PC-3 (cell line): ENCODE measurements at regions of chr1 and their contacts with region 1.

Region 1: DNA sequence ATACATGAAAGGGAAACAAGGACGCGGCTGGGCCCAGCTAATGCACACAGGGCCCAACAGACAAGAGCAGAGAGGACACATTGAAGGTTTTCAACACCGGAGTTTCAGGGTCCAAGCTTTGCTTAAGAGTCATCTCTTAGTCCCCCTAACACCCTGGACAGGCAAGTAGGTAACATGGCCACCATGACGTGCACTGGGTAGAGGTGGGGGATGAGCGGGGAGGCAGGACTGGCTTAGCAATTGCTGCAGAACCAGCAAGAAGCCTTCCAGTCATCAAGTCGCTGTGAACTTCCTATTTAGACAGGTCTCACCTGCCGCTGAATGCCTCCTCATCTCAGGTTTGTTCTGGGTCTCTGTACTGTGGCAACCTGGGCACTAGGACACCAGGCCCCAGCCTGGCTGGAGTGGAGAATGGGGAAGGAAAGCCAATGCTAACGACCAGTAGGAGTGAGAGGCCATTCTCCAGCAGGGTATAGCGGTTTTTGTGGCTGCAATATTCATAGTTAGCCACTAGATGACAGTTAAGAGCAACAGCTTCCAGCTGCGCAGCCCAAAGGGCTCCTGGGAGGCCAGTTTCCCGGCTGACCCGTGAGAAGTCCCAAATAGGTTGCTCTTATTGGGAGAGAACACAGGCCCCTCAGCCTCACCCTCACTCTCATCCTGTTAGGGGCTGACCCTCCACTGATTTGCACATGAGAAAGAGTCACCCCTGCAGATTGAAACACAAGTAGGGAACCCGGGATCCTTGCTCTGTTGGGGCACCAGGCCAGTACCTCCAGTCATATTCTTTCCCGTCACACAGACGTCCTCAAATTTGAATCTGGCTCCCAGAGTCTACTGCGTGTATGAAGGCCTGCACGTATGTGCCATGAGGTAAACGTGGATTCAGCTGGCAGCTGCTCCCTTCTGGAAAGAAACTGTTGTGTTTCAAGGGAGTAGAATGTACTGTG is 6.0 kb upstream of the PIGC start:
- DNase-seq: peak; percentile 97
- ATAC-seq: peak; percentile 48
- H3K4me3 ChIP-seq: peak overlapping the region; percentile 45
- H3K27ac ChIP-seq: peak overlapping the region; percentile 86
- H3K4me1 ChIP-seq: peaks cover 79% of the 10 kb centered on the region
- H3K27me3 ChIP-seq: no peaks in the 10 kb centered on the region
- CTCF ChIP-seq: peak; percentile 100

Region 2: GRCh38 chr1:172482044-172482443 is 32.2 kb after region 1 on chr1:
- CTCF ChIA-PET with region 1: interaction called, 5 read pairs
- POLR2A ChIA-PET with region 1: interaction called, 6 read pairs
- intact Hi-C with region 1: loop called (anchors 1 kb)
- DNase-seq: peak; percentile 50
- ATAC-seq: no peak
- H3K4me3 ChIP-seq: no peak overlapping the region
- H3K27ac ChIP-seq: no peak overlapping the region
- H3K4me1 ChIP-seq: peaks cover 46% of the 10 kb centered on the region
- H3K27me3 ChIP-seq: no peaks in the 10 kb centered on the region
- CTCF ChIP-seq: no peak

Region 3: DNA sequence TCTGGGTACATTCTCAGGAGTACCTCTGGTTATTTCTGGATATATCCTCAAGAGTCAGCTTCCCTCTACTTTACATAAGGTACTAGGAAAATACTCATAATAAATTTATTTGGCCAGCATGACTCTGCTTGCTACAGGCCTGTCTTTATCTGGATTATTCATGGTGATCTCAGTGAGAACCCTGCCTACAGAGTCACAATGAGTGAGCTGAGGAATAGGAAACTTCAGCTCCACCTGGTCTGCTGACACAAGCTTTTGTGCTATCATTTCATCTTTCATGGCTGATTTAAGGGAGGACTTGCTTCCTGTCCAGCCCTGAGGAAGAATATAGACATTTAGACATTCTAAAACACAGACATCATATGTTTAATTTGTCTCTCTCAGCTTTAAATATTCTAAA is 63.6 kb after region 1 on chr1:
- CTCF ChIA-PET with region 1: interaction called, 4 read pairs
- POLR2A ChIA-PET with region 1: interaction called, 3 read pairs
- intact Hi-C with region 1: loop called (anchors 1 kb)
- DNase-seq: peak; percentile 89
- ATAC-seq: peak; percentile 98
- H3K4me3 ChIP-seq: no peak overlapping the region
- H3K27ac ChIP-seq: peak overlapping the region; percentile 33
- H3K4me1 ChIP-seq: peaks cover 25% of the 10 kb centered on the region
- H3K27me3 ChIP-seq: no peaks in the 10 kb centered on the region
- CTCF ChIP-seq: no peak

Region 4: GRCh38 chr1:172609528-172609927 is 159.7 kb after region 1 on chr1:
- CTCF ChIA-PET with region 1: interaction called, 13 read pairs
- POLR2A ChIA-PET with region 1: no interaction called
- intact Hi-C with region 1: loop called (anchors 1 kb)
- DNase-seq: peak; percentile 88
- ATAC-seq: peak; percentile 93
- H3K4me3 ChIP-seq: no peak overlapping the region
- H3K27ac ChIP-seq: no peak overlapping the region
- H3K4me1 ChIP-seq: 0 out of 2 replicates have a peak, but pooled peaks cover 8% of the 10 kb centered on the region
- H3K27me3 ChIP-seq: no peaks in the 10 kb centered on the region
- CTCF ChIP-seq: peak; percentile 99

Region 5: DNA sequence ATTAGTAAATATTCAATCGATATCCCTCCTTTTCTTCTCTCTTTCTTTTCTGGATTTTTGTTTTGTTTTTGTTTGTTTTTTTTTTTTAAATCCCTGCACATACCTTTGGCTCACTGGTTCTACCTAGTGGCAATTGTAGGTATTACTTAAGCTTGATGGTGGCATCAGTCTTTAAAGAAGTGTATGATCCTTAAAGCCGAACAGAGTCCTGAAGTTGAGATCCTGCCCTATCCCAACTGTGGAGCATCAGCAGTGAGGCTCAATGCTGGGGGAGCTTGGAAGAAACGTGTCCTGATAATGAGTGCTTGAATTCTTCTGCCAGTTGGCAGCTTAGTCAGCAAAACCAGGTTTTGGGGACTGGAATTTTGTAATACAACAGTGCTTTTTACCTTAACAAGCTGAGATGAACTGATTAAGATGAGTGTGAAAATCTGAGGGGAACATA is 269.9 kb after region 1 on chr1:
- CTCF ChIA-PET with region 1: interaction called, 16 read pairs
- POLR2A ChIA-PET with region 1: no interaction called
- intact Hi-C with region 1: loop called (anchors 1 kb)
- DNase-seq: peak; percentile 97
- ATAC-seq: peak; percentile 81
- H3K4me3 ChIP-seq: no peak overlapping the region
- H3K27ac ChIP-seq: no peak overlapping the region
- H3K4me1 ChIP-seq: peaks cover 32% of the 10 kb centered on the region
- H3K27me3 ChIP-seq: no peaks in the 10 kb centered on the region
- CTCF ChIP-seq: peak; percentile 100